WTC11 (cell line): ENCODE measurements at regions of chr20 and their contacts with region 1.

Region 1: DNA sequence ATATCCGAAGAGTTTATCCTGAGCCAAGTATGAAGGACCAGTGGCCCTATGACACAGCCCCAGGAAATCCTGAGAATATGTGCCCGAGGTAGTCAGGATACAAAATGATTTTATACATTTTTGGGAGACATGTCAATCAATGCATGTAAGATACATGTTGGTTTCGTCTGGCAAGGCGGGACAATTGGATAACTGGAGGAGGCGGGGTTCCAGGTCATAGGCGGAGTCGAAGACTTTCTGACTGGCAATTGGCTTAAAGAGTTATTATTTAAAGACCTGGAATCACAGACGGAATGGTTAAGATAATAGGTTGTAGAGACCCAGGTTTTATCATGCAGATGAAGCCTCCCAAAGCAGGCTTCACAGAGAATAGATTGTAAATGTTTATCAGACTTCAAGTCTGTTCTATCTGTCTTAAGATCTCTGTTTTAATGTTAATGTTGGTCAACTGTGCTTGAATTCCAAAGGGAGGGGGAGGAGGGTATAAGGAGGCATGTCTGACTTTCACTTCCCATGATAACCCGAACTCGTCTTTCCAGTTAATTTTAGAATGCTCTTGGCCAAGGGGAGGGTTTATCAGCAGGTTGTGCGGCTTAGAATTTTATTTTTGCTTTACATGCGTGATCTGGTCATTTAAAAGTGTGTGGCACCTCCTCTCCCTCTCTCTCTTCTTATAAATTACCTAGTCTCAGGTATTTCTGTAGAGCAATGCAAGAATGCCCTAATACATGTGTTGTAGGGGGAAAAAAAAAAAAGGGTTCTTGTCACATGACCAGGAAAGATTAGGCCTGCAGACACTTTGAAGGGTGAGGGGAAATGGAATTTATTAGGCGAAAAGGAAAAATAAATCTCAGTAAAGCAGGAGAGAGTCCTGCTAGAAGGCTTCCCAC is 230.7 kb downstream of the NFATC2 start:
- DNase-seq: peak; percentile 49
- ATAC-seq: peak; percentile 84
- H3K4me3 Mint-ChIP-seq: peak overlapping the region; percentile 48
- H3K27ac Mint-ChIP-seq: peak overlapping the region; percentile 80
- H3K4me1 Mint-ChIP-seq: peaks cover 51% of the 10 kb centered on the region
- H3K27me3 Mint-ChIP-seq: peaks cover 66% of the 10 kb centered on the region
- CTCF ChIP-seq: no peak

Region 2: GRCh38 chr20:51298141-51298749 is 13.6 kb before region 1 on chr20:
- CTCF ChIA-PET with region 1: no interaction called
- POLR2A ChIA-PET with region 1: no interaction called
- DNase-seq: no peak
- ATAC-seq: no peak
- H3K4me3 Mint-ChIP-seq: no peak overlapping the region
- H3K27ac Mint-ChIP-seq: no peak overlapping the region
- H3K4me1 Mint-ChIP-seq: no peaks in the 10 kb centered on the region
- H3K27me3 Mint-ChIP-seq: peaks cover 2% of the 10 kb centered on the region; the same call in 1 of the 2 replicates
- CTCF ChIP-seq: no peak

Region 3: GRCh38 chr20:51326201-51326819 is 14.5 kb after region 1 on chr20:
- CTCF ChIA-PET with region 1: interaction called, 66 read pairs
- POLR2A ChIA-PET with region 1: no interaction called
- DNase-seq: peak; percentile 76
- ATAC-seq: peak; percentile 91
- H3K4me3 Mint-ChIP-seq: no peak overlapping the region
- H3K27ac Mint-ChIP-seq: no peak overlapping the region
- H3K4me1 Mint-ChIP-seq: peaks cover 16% of the 10 kb centered on the region
- H3K27me3 Mint-ChIP-seq: peaks cover 3% of the 10 kb centered on the region; the same call in 1 of the 2 replicates
- CTCF ChIP-seq: peak; percentile 37; the same call in 1 of the 2 replicates

Region 4: GRCh38 chr20:51460569-51461250 is 148.9 kb after region 1 on chr20:
- CTCF ChIA-PET with region 1: no interaction called
- POLR2A ChIA-PET with region 1: no interaction called
- DNase-seq: no peak
- ATAC-seq: peak; percentile 44; the same call in 1 of the 2 replicates
- H3K4me3 Mint-ChIP-seq: no peak overlapping the region
- H3K27ac Mint-ChIP-seq: peak overlapping the region; percentile 86
- H3K4me1 Mint-ChIP-seq: peaks cover 7% of the 10 kb centered on the region
- H3K27me3 Mint-ChIP-seq: no peaks in the 10 kb centered on the region; the same call in 1 of the 2 replicates
- CTCF ChIP-seq: no peak